Vagina (tissue), 2 donors: ENCODE measurements at regions of chr14 and their contacts with region 1.

Region 1: GRCh38 chr14:101254805-101255764 is 306.2 kb upstream of the DIO3 start:
- DNase-seq: peak in 1 of 2 donors; percentile 83
- H3K4me3 ChIP-seq: no peak overlapping the region
- H3K27ac ChIP-seq: no peak overlapping the region
- H3K4me1 ChIP-seq: no peaks in the 10 kb centered on the region
- H3K27me3 ChIP-seq: no peaks in the 10 kb centered on the region
- CTCF ChIP-seq: no peak
- POLR2A ChIP-seq: no peak

Region 2: GRCh38 chr14:100225169-100225568 is 1029.9 kb before region 1 on chr14:
- intact Hi-C with region 1: loop called (anchors 5 kb)
- DNase-seq: no peak
- H3K4me3 ChIP-seq: no peak overlapping the region
- H3K27ac ChIP-seq: no peak overlapping the region
- H3K4me1 ChIP-seq: peaks cover 23% of the 10 kb centered on the region
- H3K27me3 ChIP-seq: no peaks in the 10 kb centered on the region
- CTCF ChIP-seq: no peak
- POLR2A ChIP-seq: no peak

Region 3: DNA sequence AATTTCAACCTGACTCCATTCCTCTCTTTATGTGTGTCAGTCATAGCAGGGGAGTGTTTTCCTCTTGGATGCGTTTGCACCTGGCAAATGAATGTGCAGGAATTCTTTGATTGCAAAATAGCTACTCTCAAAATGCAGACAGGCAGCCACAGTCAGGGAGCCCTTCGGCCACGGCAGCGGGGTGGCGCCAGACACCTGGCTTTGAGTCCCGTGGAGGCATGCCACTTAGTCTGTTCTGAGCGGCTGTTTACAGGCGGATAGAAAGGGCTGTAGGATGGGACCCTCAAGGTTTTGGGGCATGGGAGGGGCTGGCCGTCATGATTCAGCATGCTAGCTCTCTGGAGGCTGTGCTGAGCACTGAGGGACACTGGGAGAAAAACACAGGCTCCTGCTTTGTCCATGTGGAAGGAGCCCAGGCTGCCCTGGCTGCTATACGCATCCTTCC is 814.9 kb before region 1 on chr14:
- intact Hi-C with region 1: no loop called
- DNase-seq: peak in 1 of 2 donors; percentile 87
- H3K4me3 ChIP-seq: no peak overlapping the region
- H3K27ac ChIP-seq: peak overlapping the region; percentile 46
- H3K4me1 ChIP-seq: peaks cover 26% of the 10 kb centered on the region
- H3K27me3 ChIP-seq: no peaks in the 10 kb centered on the region
- CTCF ChIP-seq: peak; percentile 25 to 60 (median 46)
- POLR2A ChIP-seq: no peak

Region 4: GRCh38 chr14:101150039-101150610 is 105.0 kb before region 1 on chr14:
- intact Hi-C with region 1: no loop called
- DNase-seq: no peak
- H3K4me3 ChIP-seq: no peak overlapping the region
- H3K27ac ChIP-seq: no peak overlapping the region
- H3K4me1 ChIP-seq: no peaks in the 10 kb centered on the region
- H3K27me3 ChIP-seq: no peaks in the 10 kb centered on the region
- CTCF ChIP-seq: no peak
- POLR2A ChIP-seq: no peak

Region 5: DNA sequence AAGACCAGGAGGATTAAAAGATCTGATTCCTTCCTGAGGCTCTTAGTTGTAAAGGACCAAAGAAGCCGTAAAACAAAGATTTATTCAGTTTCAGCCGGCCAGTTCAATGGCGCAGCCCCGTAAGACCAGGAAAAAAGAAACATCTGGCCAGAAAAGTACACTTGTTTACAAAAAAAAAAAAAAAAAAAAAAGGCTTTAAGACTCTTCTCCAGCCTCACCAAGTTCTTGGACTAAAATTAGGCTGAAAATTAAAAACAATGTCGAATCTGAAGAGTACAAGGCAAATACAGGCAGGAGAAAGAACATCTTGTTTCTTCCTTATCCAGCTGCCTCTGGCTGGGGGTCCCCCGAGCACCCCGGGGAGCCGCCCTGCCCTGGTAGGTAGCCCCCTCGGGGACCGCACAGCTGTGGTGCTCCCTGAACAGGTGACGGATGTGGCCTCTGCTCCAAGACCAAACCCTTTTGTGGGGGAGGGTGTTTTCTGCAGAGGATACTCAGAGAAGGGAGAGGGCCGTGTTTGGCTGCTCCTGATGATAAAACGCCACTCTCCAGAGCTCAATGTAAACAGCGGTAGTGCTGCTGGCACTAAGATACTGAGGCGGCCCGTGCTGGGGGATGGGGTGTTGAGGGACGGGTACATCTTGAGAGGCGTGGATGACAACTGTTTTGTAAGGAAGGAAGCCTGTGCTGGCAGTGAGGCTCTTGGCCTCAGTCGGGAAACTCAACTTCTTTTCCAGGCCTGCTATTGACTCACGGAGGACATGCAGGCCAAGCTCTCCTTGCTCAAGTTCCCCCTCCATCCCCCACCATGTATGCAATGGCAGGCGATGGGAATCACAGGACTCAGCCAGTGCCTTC is 105.2 kb after region 1 on chr14:
- intact Hi-C with region 1: no loop called
- DNase-seq: peak; percentile 82 to 97
- H3K4me3 ChIP-seq: peak overlapping the region in 1 of 2 donors; percentile 10
- H3K27ac ChIP-seq: peak overlapping the region; percentile 83
- H3K4me1 ChIP-seq: peaks cover 62% of the 10 kb centered on the region
- H3K27me3 ChIP-seq: no peaks in the 10 kb centered on the region
- CTCF ChIP-seq: no peak
- POLR2A ChIP-seq: no peak